ENCODE measurements at regions of chr19 and their contacts with region 1.

Region 1: GRCh38 chr19:49665351-49666119 is at the starts of genes BCL2L12 and IRF3:
- DNase-seq: peak; percentile 98 to 100
- H3K4me3 ChIP-seq: peak within 1 kb of the TSS; percentile 55
- CTCF ChIP-seq: no peak
- POLR2A ChIP-seq: peak in 1 of 2 donors; percentile 62
- total RNA-seq, gene BCL2L12: 6.1 to 9.2 (median 6.6) TPM
- total RNA-seq, gene IRF3: 38.7 to 102 (median 74.9) TPM

Region 2: GRCh38 chr19:49570138-49570856 is 95.2 kb before region 1 on chr19:
- intact Hi-C with region 1: loop called (anchors 10 kb)
- DNase-seq: no peak
- H3K4me3 ChIP-seq: no peak overlapping the region
- CTCF ChIP-seq: peak in 1 of 3 donors; percentile 91
- POLR2A ChIP-seq: no peak

Region 3: GRCh38 chr19:49590071-49590970 is 75.2 kb before region 1 on chr19:
- intact Hi-C with region 1: no loop called
- DNase-seq: peak; percentile 96 to 99
- H3K4me3 ChIP-seq: peak overlapping the region; percentile 42
- CTCF ChIP-seq: no peak
- POLR2A ChIP-seq: no peak

Region 4: DNA sequence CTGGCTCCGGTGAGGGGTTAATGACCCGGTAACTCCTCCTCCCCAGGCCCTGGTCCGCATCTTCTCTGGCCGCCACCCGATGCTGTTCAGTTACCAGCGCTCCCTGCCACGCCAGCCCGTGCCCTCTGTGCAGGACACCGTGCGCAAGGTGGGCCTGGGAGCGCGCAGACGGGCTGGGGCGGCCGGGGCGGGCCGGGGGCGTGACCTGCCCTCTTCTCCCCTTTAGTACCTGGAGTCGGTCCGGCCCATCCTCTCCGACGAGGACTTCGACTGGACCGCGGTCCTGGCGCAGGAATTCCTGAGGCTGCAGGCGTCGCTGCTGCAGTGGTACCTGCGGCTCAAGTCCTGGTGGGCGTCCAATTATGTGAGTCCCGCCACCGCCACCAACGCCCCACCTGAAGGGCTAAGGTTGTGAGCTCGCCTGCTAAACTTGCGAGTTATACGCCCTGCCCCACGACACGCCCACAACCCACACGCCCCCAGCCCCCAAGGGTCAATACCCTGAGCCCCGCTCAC is 35.8 kb after region 1 on chr19:
- intact Hi-C with region 1: no loop called
- DNase-seq: no peak
- H3K4me3 ChIP-seq: no peak overlapping the region
- CTCF ChIP-seq: no peak
- POLR2A ChIP-seq: no peak